Posterior vena cava (tissue), 2 donors: ENCODE measurements at regions of chr7 and their contacts with region 1.

Region 1: GRCh38 chr7:26398756-26399501 is 107.3 kb downstream of the SNX10 start:
- DNase-seq: peak; percentile 83

Region 2: DNA sequence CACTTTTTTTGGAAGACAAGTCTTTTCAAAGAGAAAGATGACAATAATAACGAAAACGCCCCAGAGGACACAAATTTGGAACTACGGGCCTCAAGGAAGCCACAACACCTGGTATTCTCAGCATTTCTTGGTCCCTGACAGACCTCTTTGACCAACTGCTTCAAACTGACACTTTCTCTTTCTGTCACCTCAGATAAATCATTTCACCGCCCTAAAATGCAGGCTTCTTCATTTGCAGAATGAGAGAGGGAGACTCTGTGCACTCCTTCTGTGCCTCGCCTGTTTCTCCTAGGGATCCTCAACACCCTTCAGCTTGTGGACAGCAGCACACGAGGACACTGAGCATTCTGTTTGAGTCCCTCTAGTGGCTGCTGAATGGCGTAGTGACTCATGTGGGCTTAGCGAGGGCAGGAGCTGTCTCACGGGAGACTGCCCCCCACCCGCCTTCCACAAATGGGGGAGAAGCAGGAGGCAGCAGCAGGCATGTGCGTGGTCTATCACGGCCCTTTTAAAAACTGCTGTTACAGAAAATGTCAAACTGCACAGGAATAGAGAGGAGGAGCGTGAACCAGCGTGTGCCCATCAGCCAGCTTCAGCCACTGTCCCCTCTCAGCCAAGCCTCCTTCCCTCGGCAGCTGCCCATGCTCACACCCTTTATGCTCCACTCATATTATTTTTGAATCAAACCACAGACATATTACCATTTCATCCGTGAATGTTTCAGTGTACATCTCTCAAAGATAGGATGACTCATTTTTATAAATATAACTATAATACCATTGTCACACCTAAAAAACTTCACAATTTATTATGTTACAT is 1683.1 kb before region 1 on chr7:
- intact Hi-C with region 1: loop called in 1 of 2 experiments (anchors 10 kb)
- DNase-seq: no peak

Region 3: GRCh38 chr7:25846722-25847121 is 552.2 kb before region 1 on chr7:
- intact Hi-C with region 1: no loop called
- DNase-seq: peak; percentile 90

Region 4: GRCh38 chr7:26429168-26429567 is 30.2 kb after region 1 on chr7:
- intact Hi-C with region 1: no loop called
- DNase-seq: no peak

Region 5: GRCh38 chr7:26460351-26461085 is 61.6 kb after region 1 on chr7:
- intact Hi-C with region 1: loop called in 1 of 2 experiments (anchors 2 kb)
- DNase-seq: no peak